AG04450 (cell line): ENCODE measurements at regions of chr17 and their contacts with region 1.

Region 1: DNA sequence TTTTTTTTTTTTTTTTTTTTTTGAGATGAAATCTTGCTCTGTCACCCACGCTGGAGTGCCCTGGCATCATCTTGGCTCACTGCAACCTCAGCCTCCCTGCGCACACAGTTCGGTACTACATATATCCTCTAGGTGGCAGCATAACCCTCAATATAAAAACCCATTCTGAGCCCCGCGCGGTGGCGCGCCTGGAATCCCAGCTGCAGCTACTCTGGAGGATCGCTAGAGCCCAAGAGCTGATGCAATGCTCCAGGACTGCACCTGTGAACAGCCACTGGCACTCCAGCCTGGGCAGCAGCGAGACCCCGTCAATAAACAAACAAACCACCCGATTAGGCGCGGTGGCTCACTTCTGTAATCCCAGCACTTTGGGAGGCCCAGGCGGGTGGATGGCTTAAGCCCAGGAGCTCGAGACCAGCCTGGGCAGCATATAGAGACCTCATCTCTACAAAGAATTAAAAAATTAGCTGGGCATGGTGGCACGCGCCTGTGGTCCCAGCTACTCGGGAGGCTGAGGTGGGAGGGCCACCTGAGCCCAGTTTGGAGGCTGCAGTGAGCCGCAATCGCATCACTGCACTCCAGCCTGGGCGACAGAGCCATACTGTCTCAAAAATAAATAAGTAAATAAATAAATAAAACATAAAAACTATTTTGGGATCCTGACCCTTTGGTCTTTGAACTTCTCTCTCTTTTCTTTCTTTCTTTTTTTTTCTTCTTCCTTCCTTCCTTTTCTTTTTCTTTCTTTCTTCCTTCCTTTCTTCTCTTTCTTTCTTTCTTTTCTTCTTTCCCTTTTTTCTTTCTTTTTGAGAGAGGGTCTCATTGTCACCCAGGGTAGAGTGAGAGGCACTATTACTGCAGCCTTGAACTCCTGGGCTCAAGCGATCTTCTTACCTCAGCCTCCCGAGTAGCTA is 15.4 kb upstream of the AKAP10 start:
- DNase-seq: peak; percentile 69
- H3K4me3 ChIP-seq: peak overlapping the region; percentile 29; the same call in 1 of the 2 replicates
- H3K27ac ChIP-seq: no peak overlapping the region
- H3K27me3 ChIP-seq: peaks cover 7% of the 10 kb centered on the region
- CTCF ChIP-seq: peak; percentile 71

Region 2: DNA sequence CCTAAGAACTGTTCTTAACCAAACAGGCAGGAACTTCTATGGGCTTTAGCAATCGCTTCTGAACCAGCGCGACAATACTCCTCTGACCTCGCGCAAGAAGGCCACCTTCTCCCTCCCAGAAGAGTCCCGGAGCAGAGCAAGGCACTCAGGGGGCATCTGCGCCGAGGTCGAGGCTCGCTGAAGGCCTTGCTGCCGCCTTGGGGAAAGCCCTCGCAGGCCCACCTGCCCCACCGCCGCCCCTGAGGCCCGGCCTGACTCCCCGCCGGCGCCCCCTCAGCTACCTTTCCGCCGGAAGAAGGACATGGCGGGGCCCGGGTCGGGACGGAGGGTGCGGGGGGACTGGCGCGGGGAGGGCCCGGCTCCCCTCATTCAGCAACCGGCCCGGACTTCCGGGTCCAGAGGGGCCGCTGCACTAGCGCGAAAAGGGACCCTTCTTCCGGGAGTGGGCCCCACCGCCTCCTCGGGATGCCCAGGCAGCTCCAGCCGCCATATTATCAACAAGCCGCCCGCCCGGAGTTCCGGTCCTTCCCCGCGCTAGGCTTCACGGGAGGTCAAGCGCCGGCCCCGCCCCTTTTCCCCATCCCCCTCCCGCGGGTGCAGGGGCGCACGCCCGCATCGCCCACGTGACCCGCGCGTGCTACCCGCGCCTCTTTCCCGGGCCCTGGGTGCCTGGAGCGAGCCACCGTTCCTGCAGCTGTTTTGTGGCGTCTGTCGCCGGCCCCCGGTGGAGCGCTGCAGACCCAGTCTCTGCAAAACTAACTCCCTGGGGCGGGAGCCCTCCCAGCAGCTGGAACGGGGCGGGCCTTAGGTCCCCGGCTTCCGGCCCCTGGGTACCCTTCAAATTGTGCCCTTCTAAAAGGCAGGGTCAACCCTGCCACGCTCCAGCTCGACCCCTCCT is 15.5 kb before region 1 on chr17 and contains the start of gene AKAP10:
- CTCF ChIA-PET with region 1: interaction called, 15 read pairs
- POLR2A ChIA-PET with region 1: no interaction called
- DNase-seq: peak; percentile 30
- H3K4me3 ChIP-seq: peak within 1 kb of the TSS; percentile 92
- H3K27ac ChIP-seq: peak within 1 kb of the TSS; percentile 73
- H3K27me3 ChIP-seq: no peaks in the 10 kb centered on the region
- CTCF ChIP-seq: no peak
- polyA plus RNA-seq, gene AKAP10: 26.8 and 33.2 TPM in 2 replicates

Region 3: DNA sequence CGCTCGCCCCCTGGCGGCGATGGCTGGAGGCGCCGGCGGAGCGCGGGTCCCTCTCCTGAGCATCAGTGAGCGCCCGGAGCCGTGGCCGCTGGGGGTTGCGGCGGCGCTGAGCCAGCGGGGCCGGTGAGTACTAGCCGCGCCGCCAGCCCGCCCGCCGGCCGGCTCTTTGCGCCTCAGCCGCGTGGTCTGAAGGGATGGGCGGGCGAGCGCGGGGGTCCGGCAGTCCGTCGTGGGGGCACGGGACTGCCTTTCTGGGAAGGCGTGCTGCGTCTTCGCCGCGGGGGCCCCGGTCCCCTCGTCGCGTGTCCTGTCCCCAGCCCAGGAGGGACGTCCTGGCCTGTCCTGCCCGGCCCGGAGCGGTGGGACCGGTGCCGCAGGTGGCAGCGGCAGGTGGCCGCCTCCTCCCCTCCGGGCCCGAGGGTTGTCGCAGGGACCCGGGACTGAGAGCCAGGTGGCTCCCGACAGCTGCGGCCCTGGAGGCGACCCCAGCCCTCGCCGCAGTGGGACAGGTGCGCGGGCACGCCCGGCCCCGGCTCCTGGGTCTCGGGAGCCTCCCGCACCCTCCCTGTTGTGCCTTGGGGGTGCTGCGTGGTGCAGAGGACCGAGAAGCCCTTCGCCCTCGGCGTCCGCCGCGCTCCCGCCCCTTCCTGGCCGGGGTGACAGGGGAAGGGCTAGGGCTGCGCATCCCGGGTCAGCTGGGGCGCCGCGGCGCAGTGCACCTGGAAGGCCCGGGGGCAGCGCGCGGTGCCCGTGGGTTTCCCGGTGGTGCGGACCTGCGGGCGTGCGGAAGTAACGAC is 16.4 kb after region 1 on chr17 and contains the start of gene SPECC1:
- CTCF ChIA-PET with region 1: interaction called, 23 read pairs
- POLR2A ChIA-PET with region 1: interaction called, 6 read pairs
- DNase-seq: no peak
- H3K4me3 ChIP-seq: peak within 1 kb of the TSS; percentile 59
- H3K27ac ChIP-seq: no peak within 1 kb of the TSS
- H3K27me3 ChIP-seq: peaks cover 38% of the 10 kb centered on the region
- CTCF ChIP-seq: peak; percentile 74
- polyA plus RNA-seq, gene SPECC1: 47.2 and 56.4 TPM in 2 replicates

Region 4: GRCh38 chr17:20121359-20122253 is 128.5 kb after region 1 on chr17:
- CTCF ChIA-PET with region 1: interaction called, 71 read pairs
- POLR2A ChIA-PET with region 1: interaction called, 3 read pairs
- DNase-seq: peak; percentile 33
- H3K4me3 ChIP-seq: no peak overlapping the region
- H3K27ac ChIP-seq: no peak overlapping the region
- H3K27me3 ChIP-seq: no peaks in the 10 kb centered on the region
- CTCF ChIP-seq: peak; percentile 93

Region 5: DNA sequence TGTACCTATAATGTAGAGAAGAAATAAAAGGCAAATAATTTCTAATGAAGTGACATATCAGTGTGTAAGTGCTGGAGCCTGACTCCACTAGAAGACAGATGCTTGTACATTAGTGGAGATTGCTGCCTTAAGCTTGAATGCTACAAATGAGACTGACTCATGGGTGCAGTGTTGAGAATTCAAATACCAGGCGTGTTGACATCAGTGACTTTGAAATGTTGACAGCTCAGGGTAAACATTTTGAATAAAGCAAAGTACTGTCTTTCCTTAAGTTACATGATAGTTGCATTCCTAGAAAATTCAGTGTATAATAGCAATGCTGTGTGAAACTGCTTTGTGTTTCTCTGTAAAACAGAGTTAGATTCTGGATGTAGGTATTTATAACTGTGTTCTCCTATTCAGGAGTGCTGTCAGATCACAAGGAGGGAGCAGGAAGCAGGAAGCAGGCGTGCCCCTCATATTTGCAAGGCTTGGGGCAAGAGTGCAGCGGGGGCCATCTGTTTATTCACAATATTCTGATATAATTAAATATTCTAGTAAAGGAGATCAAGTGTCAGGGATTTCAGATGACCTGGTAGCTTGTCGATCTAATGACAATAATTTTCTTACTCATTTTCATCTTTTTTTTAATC is 135.1 kb after region 1 on chr17:
- CTCF ChIA-PET with region 1: interaction called, 3 read pairs
- POLR2A ChIA-PET with region 1: interaction called, 11 read pairs
- DNase-seq: peak; percentile 92
- H3K4me3 ChIP-seq: peak overlapping the region; percentile 1; the same call in 1 of the 2 replicates
- H3K27ac ChIP-seq: peak overlapping the region; percentile 80
- H3K27me3 ChIP-seq: no peaks in the 10 kb centered on the region
- CTCF ChIP-seq: no peak

Region 6: GRCh38 chr17:20179041-20179440 is 186.0 kb after region 1 on chr17:
- CTCF ChIA-PET with region 1: interaction called, 10 read pairs
- POLR2A ChIA-PET with region 1: no interaction called
- DNase-seq: no peak
- H3K4me3 ChIP-seq: no peak overlapping the region
- H3K27ac ChIP-seq: no peak overlapping the region
- H3K27me3 ChIP-seq: no peaks in the 10 kb centered on the region
- CTCF ChIP-seq: no peak

Region 7: DNA sequence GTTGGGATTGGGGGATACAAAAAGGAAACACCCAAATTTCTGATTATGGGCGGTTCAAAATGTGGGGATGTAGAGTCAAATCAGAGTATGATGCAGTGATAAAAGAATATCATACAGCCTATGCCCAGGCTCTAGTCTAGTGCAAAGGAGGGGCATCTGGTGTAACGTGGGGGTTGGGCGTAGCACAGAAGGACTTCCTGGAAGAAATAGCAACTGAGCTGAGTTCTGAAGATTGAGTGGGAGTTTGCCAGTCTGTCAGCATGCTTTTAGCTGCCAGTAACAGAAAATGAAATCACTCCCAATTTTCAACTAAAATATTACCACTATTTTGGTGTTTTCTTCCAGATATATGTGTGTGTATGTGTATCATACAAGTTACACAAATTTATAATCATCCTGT is 213.0 kb after region 1 on chr17:
- CTCF ChIA-PET with region 1: interaction called, 12 read pairs
- POLR2A ChIA-PET with region 1: no interaction called
- DNase-seq: no peak
- H3K4me3 ChIP-seq: no peak overlapping the region
- H3K27ac ChIP-seq: no peak overlapping the region
- H3K27me3 ChIP-seq: no peaks in the 10 kb centered on the region
- CTCF ChIP-seq: no peak